ENCODE measurements at regions of chr17 and their contacts with region 1.

Region 1: DNA sequence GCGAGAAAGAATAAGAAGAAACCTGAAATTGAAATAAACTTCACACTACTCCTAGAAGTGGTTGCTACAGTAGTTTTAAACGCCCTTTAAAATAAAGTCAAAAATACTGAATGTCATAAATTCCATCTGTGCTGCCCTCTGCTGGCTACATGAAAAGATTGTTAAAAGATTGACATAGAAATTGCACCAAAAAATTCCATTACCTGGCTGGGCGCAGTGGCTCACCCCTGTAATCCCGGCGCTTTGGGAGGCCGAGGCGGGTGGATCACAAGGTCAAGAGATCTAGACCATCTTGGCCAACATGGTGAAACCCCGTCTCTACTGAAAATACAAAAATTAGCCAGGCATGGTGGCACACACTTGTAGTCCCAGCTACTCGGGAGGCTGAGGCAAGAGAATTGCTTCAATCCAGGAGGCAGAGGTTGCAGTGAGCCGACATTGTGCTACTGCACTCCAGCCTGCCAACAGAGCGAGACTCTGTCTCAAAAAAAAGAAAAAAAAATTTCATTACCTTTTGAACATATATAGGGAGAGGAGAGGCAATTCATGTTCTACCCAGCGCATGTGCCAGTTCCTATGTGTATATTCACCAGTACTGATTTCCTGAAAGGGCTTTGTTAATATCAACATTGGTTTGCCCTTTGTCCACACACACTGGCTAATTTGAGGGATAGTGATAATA is 36.5 kb downstream of the CYTH1 start:
- DNase-seq: peak; percentile 56
- ATAC-seq: no peak
- H3K4me3 Mint-ChIP-seq: no peak overlapping the region
- H3K27ac Mint-ChIP-seq: peak overlapping the region; percentile 51
- H3K4me1 Mint-ChIP-seq: peaks cover 89% of the 10 kb centered on the region
- H3K27me3 Mint-ChIP-seq: no peaks in the 10 kb centered on the region

Region 2: DNA sequence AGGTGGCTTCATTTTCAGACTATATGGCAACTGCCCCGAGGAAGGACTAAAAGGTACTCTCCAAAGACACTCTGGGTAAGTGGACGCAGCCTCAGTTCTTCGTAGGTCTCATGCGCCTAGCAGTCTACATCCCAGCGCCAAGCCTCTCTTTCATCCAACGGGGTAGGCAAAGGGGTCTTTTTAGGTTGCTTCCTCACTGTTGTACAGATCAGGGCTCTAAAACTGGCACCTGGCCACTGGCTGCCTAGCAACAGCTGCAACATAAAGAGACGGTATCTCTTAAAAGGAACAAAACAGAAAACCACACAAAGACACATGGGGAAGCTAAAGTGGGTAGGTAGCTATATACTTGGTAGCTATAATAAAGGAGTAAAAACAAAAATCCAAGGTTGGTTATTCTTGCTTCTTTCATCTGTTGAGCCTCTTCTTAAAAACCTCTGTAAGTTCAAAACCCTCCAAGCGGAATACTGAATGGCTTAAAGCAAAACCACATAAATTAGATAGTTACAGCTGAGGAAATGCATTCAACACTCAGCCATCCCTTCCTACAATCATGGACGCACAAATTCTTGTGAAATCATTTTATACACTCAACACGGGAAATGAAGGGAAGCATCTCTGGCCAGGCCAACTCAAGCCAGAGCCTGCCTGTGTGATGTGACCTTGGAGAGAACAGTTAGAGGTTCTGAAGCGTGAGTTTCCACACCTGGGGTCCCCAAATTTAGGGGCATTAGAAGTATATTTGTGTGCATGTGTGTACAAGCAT is 13.8 kb after region 1 on chr17:
- CTCF ChIA-PET with region 1: interaction called, 10 read pairs
- DNase-seq: peak; percentile 84
- ATAC-seq: peak; percentile 89
- H3K4me3 Mint-ChIP-seq: peak overlapping the region; percentile 55
- H3K27ac Mint-ChIP-seq: peak overlapping the region; percentile 86
- H3K4me1 Mint-ChIP-seq: peaks cover 68% of the 10 kb centered on the region
- H3K27me3 Mint-ChIP-seq: no peaks in the 10 kb centered on the region

Region 3: GRCh38 chr17:78769196-78769773 is 23.7 kb after region 1 on chr17:
- CTCF ChIA-PET with region 1: interaction called, 18 read pairs
- DNase-seq: no peak
- ATAC-seq: peak; percentile 28
- H3K4me3 Mint-ChIP-seq: no peak overlapping the region
- H3K27ac Mint-ChIP-seq: no peak overlapping the region
- H3K4me1 Mint-ChIP-seq: peaks cover 46% of the 10 kb centered on the region
- H3K27me3 Mint-ChIP-seq: no peaks in the 10 kb centered on the region